Gastrocnemius medialis (tissue), 4 donors: ENCODE measurements at regions of chr17 and their contacts with region 1.

Region 1: DNA sequence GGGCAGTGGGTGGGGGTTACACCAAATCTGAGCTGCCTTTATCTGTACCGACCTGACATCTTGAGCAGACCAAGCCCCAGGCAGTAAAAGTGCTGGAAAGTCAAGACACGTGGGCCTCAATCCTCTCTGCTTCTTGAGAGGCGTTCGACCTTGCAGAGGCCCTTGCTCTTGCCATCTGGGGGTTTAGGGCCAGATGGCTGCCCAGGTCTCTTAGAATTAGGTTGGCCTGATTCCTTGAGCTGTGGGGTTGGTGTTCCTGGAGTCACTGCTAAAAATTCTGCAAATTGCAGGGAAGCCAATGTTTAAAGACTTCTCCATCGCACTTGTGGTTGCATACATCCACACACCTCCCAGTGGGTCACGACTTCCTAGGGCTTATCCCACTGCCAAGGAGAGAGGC is 238.2 kb upstream of the ASIC2 start:
- DNase-seq: no peak
- ATAC-seq: no peak
- H3K4me3 ChIP-seq: no peak overlapping the region
- H3K27ac ChIP-seq: no peak overlapping the region
- H3K4me1 ChIP-seq: no peaks in the 10 kb centered on the region
- H3K27me3 ChIP-seq: no peaks in the 10 kb centered on the region
- CTCF ChIP-seq: no peak
- POLR2A ChIP-seq: no peak

Region 2: DNA sequence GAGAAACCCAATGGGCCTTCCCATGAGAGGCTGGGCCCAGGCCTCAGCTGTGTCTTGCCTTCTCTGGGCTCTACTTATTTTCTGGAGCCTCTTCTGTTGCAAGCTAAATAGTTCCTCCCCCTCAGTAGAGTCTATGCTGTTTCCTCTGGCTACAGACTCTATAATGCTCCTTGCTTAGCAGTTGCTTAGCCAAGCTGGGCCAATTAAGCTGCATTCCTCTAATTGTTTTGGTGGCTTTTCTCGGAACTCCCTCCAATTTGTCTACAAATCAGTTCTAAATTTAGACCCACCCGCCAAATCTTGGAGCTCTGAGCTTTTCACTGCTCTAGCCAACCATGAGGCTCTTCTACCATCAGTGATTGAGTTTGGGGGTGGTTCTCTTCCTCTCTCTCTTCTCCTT is 64.5 kb after region 1 on chr17:
- in situ Hi-C with region 1: loop called in 1 of 4 experiments (anchors 10 kb)
- intact Hi-C with region 1: no loop called
- DNase-seq: no peak
- ATAC-seq: no peak
- H3K4me3 ChIP-seq: no peak overlapping the region
- H3K27ac ChIP-seq: no peak overlapping the region
- H3K4me1 ChIP-seq: no peaks in the 10 kb centered on the region
- H3K27me3 ChIP-seq: no peaks in the 10 kb centered on the region
- CTCF ChIP-seq: no peak
- POLR2A ChIP-seq: no peak